Astrocyte of the cerebellum (primary cell): ENCODE measurements at regions of chr6 and their contacts with region 1.

Region 1: GRCh38 chr6:21648475-21649130 is 55.1 kb downstream of the SOX4 start:
- DNase-seq: no peak
- H3K4me3 ChIP-seq: no peak overlapping the region
- CTCF ChIP-seq: no peak

Region 2: DNA sequence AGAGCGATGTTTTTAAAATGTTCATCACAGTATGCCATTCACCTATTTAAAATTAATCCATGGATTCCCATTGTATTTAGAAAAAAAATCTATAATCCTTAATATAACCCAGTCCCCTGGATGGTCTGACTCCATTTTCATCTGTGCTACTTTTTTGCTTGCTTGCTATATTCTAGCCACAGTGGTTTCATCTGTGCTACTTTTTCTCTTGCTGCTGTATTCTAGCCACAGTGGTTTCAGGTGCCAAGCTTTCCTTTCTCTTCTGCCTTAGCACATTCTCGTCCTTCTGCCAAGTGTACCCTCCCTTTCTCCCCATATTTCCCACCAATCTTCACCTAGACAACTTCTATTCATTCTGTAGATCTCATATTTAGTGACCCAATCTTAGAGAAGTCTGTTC is 88.4 kb before region 1 on chr6:
- in situ Hi-C with region 1: no loop called
- DNase-seq: no peak
- H3K4me3 ChIP-seq: no peak overlapping the region
- CTCF ChIP-seq: no peak

Region 3: GRCh38 chr6:21582651-21583050 is 66.0 kb before region 1 on chr6:
- in situ Hi-C with region 1: no loop called
- DNase-seq: no peak
- H3K4me3 ChIP-seq: no peak overlapping the region
- CTCF ChIP-seq: no peak

Region 4: DNA sequence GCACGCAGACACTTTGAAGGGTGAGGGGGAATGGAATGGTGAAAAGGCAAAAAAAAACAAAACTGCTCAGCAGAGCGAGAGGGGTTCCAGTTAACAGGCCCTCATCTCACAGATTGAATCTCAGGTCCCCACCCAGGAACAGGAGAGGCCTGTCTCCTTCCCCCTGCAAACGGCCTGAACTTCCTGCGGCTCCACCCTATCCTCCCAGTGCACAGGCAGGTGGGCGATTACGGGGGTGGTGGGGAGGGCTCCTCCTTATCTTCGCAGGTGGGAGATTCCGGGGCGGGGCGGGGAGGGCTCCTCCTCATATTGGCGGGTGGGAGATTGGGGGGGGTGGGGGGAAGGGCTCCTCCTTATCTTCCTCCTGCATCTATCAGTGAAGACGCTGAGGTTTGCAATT is 73.9 kb after region 1 on chr6:
- in situ Hi-C with region 1: loop called (anchors 5 kb)
- DNase-seq: no peak
- H3K4me3 ChIP-seq: no peak overlapping the region
- CTCF ChIP-seq: no peak